ENCODE measurements at regions of chr1 and their contacts with region 1.

Region 1: GRCh38 chr1:22264464-22265341 is 121.8 kb upstream of the WNT4 start:
- DNase-seq: no peak
- ATAC-seq: peak; percentile 35; the same call in 1 of the 2 replicates
- H3K4me3 ChIP-seq: no peak overlapping the region
- H3K27ac ChIP-seq: no peak overlapping the region
- H3K4me1 ChIP-seq: peaks cover 4% of the 10 kb centered on the region; the same call in 1 of the 2 replicates
- H3K27me3 ChIP-seq: no peaks in the 10 kb centered on the region
- CTCF ChIP-seq: no peak

Region 2: DNA sequence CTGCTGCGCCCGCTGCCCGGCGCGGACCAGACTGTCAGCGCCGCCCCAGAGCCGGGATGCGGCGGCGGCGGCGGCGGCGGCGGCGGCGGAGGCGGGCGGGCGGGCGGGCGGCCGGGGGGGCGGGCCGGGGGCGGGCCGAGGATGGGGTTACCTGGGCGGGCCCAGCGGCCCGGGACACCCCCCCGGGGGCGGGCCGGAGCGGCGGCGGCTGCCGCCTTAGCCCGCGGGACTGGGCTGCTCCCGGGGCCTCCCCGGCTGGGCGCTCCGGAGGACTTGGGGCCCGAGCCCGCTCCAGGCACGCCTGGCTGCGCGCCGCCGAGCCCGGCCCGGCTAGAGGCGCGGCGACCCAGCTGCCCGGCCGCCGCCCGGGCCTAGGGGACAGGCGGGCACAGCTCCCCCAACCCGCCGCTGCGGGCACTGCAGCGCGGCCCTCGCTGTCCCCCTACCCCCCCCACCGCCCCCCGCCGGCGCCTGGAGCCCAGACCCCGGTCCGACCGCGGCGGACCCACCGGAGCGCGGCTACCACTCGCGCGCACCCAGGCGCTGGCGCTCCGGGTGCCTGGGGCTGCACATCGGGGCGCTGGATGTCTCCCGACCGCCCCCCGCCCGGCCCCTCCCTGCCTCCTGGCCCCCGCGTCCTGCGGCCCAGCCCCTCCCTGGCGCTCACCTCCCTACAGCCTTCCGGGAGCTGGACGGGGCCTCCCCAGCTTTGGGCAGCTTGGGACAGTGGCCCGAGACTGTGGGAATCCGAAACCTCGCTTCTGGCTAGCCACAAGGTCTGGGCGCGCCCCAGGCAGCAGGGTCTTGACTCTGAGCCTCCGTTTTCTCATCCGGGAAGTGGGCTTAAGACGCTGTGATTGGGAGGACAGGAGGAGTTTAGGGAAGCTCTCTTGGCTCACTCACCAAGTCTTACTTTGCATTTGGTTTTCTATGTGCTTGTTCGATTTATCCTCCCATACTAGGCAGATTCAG is 121.4 kb before region 1 on chr1 and contains the start of gene WNT4:
- CTCF ChIA-PET with region 1: interaction called, 5 read pairs
- POLR2A ChIA-PET with region 1: interaction called, 20 read pairs
- in situ Hi-C with region 1: no loop called
- intact Hi-C with region 1: no loop called
- DNase-seq: no peak
- ATAC-seq: peak; percentile 85
- H3K4me3 ChIP-seq: peak within 1 kb of the TSS; percentile 44 to 46
- H3K27ac ChIP-seq: no peak within 1 kb of the TSS
- H3K4me1 ChIP-seq: peaks cover 9% of the 10 kb centered on the region
- H3K27me3 ChIP-seq: no peaks in the 10 kb centered on the region
- CTCF ChIP-seq: no peak; the same call in 1 of the 2 replicates
- total RNA-seq, gene WNT4: 0.92 TPM

Measured in Panc1 (cell line).